ENCODE measurements at regions of chr7 and their contacts with region 1.

Region 1: GRCh38 chr7:85851571-85852193 is 664.8 kb upstream of the SEMA3D start:
- DNase-seq: no peak
- H3K4me3 ChIP-seq: no peak overlapping the region
- H3K27ac ChIP-seq: no peak overlapping the region
- H3K4me1 ChIP-seq: no peaks in the 10 kb centered on the region
- H3K27me3 ChIP-seq: no peaks in the 10 kb centered on the region
- CTCF ChIP-seq: peak; percentile 60

Region 2: DNA sequence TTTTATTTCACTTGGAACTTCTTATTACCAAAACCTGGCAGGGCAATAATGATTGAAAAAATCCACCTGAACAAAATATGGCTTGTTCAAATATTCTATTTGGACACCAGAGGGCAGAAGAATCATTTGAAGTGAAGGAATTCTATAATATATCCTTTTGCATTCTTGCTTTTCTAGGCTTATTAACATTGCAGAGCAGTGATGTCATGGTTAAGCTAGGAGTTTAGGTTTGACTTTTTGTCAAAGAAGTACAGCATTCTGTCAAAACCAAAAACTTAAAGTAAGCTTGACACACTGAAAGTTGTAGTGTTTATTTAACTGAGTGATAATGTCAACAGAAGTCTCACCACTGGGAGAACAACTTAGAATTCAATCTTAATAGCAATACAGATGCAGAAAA is 820.8 kb before region 1 on chr7:
- CTCF ChIA-PET with region 1: no interaction called
- POLR2A ChIA-PET with region 1: no interaction called
- intact Hi-C with region 1: loop called (anchors 1 kb)
- DNase-seq: no peak
- H3K4me3 ChIP-seq: no peak overlapping the region
- H3K27ac ChIP-seq: no peak overlapping the region
- H3K4me1 ChIP-seq: no peaks in the 10 kb centered on the region
- H3K27me3 ChIP-seq: no peaks in the 10 kb centered on the region
- CTCF ChIP-seq: peak; percentile 81

Measured in PC-9 (cell line).